Mammary epithelial cell (primary cell): ENCODE measurements at regions of chr17 and their contacts with region 1.

Region 1: GRCh38 chr17:66715745-66716156 is 119.2 kb upstream of the CACNG5 start:
- DNase-seq: peak; percentile 61
- H3K4me3 ChIP-seq: no peak overlapping the region
- H3K27ac ChIP-seq: no peak overlapping the region
- H3K4me1 ChIP-seq: peaks cover 17% of the 10 kb centered on the region
- H3K27me3 ChIP-seq: no peaks in the 10 kb centered on the region
- CTCF ChIP-seq: peak; percentile 58 to 77

Region 2: GRCh38 chr17:66691644-66692420 is 23.9 kb before region 1 on chr17:
- CTCF ChIA-PET with region 1: interaction called, 11 read pairs
- dilution Hi-C with region 1: no loop called
- in situ Hi-C with region 1: no loop called
- intact Hi-C with region 1: no loop called
- DNase-seq: no peak
- H3K4me3 ChIP-seq: no peak overlapping the region
- H3K27ac ChIP-seq: no peak overlapping the region
- H3K4me1 ChIP-seq: no peaks in the 10 kb centered on the region
- H3K27me3 ChIP-seq: no peaks in the 10 kb centered on the region
- CTCF ChIP-seq: no peak

Region 3: GRCh38 chr17:66900126-66901010 is 184.6 kb after region 1 on chr17:
- CTCF ChIA-PET with region 1: interaction called, 3 read pairs
- dilution Hi-C with region 1: no loop called
- in situ Hi-C with region 1: loop called (anchors 5 to 10 kb)
- intact Hi-C with region 1: loop called (anchors 1 kb)
- DNase-seq: no peak
- H3K4me3 ChIP-seq: no peak overlapping the region
- H3K27ac ChIP-seq: peak overlapping the region; percentile 3
- H3K4me1 ChIP-seq: peaks cover 25% of the 10 kb centered on the region
- H3K27me3 ChIP-seq: no peaks in the 10 kb centered on the region
- CTCF ChIP-seq: peak; percentile 30 to 33

Region 4: GRCh38 chr17:66975604-66976384 is 260.0 kb after region 1 on chr17:
- CTCF ChIA-PET with region 1: no interaction called
- dilution Hi-C with region 1: no loop called
- in situ Hi-C with region 1: no loop called
- intact Hi-C with region 1: loop called (anchors 5 kb)
- DNase-seq: peak; percentile 25
- H3K4me3 ChIP-seq: no peak overlapping the region
- H3K27ac ChIP-seq: no peak overlapping the region
- H3K4me1 ChIP-seq: peaks cover 12% of the 10 kb centered on the region
- H3K27me3 ChIP-seq: no peaks in the 10 kb centered on the region
- CTCF ChIP-seq: peak; percentile 37 to 55

Region 5: GRCh38 chr17:67027031-67027628 is 311.4 kb after region 1 on chr17:
- CTCF ChIA-PET with region 1: no interaction called
- dilution Hi-C with region 1: no loop called
- in situ Hi-C with region 1: no loop called
- intact Hi-C with region 1: no loop called
- DNase-seq: no peak
- H3K4me3 ChIP-seq: no peak overlapping the region
- H3K27ac ChIP-seq: no peak overlapping the region
- H3K4me1 ChIP-seq: no peaks in the 10 kb centered on the region
- H3K27me3 ChIP-seq: no peaks in the 10 kb centered on the region
- CTCF ChIP-seq: no peak

Region 6: DNA sequence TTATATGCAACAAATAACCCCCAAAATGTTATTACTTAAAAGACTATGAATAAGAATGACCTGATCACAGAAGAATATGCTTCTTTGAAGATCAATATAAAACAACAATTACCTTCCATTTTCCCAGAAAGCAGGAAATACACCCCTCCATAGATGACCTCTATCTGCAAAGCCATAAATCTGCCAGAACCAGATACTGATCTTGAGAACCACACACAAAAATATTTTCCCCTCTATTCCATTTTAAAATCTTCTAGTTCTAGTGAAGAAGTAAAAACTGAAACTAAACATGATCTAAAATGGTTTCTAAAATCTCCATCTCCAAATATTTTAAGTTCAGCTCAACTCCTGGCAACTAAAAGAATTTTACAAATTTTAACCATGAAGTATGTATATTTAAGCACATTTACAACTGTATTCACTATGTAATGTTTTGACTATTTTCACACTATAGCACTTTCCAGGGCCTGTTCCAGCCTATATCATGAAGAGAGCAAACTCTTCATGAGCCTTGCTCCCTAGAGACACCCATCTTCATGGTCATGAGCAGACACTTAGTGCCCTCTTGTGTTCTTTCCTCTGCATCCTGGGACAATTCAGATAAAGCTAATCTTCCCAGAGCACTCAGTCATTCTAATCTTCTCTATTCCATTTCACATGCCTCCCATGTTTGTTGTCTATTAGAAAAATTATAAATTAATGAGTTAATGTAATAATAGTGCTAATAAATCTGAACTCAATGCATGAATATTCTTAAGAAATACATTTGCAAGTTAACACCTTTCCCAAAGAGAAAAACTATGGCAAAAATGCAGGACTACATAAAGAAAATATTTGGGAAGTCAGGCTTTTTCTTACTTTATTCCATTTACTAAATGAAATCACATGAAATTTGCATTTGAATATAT is 442.2 kb after region 1 on chr17:
- CTCF ChIA-PET with region 1: no interaction called
- dilution Hi-C with region 1: no loop called
- in situ Hi-C with region 1: no loop called
- intact Hi-C with region 1: loop called (anchors 5 kb)
- DNase-seq: no peak
- H3K4me3 ChIP-seq: no peak overlapping the region
- H3K27ac ChIP-seq: no peak overlapping the region
- H3K4me1 ChIP-seq: no peaks in the 10 kb centered on the region
- H3K27me3 ChIP-seq: no peaks in the 10 kb centered on the region
- CTCF ChIP-seq: peak; percentile 24 to 46